Vagina (tissue), 2 donors: ENCODE measurements at regions of chr12 and their contacts with region 1.

Region 1: GRCh38 chr12:104790296-104791125 is 167.6 kb downstream of the SLC41A2 start:
- DNase-seq: no peak
- H3K4me3 ChIP-seq: no peak overlapping the region
- H3K27ac ChIP-seq: no peak overlapping the region
- H3K4me1 ChIP-seq: no peaks in the 10 kb centered on the region
- H3K27me3 ChIP-seq: no peaks in the 10 kb centered on the region
- CTCF ChIP-seq: peak in 2 of 3 experiments; percentile 24 to 36
- POLR2A ChIP-seq: no peak

Region 2: DNA sequence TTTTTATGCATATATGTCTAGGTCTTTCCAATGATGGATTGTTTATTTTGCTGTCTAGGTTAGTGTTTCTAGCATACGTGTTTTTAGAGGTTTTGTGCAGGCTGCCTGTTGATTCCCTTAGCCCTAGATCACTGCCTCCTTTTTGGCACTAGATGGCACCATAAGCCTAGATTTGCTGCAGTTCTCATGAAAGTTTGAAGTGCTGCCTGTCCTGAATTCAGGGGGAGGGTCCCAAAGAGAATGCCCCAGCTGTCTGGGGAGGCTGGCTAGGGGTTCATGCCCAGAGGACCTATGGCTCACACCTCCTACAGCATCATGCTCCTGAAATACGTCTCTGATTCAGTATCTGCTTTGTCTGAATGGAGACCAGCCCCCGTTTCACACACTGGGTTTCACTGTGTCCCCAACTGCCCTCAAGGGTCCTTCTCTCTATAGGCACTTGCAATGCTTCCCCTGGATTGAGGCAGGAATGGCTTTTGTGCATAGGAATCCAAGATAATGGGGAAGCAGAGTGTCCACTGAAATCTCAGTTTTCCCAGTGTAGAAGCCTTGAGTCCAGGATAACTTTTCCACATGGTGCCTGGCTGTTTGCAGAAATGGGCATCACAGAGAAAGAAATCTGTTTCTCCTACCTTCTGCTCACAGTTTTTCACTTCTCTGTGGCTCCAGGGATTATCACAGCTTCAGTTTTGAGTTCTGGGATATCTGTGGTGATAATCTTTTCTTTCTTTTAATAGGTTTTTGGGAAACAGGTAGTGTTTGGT is 589.1 kb before region 1 on chr12:
- intact Hi-C with region 1: loop called (anchors 10 kb)
- DNase-seq: peak in 1 of 2 donors; percentile 55
- H3K4me3 ChIP-seq: no peak overlapping the region
- H3K27ac ChIP-seq: no peak overlapping the region
- H3K4me1 ChIP-seq: no peaks in the 10 kb centered on the region
- H3K27me3 ChIP-seq: no peaks in the 10 kb centered on the region
- CTCF ChIP-seq: peak; percentile 61 to 73 (median 69)
- POLR2A ChIP-seq: no peak